Endothelial cell of umbilical vein (primary cell): ENCODE measurements at regions of chr21 and their contacts with region 1.

Region 1: GRCh38 chr21:42145569-42146272 is 73.2 kb upstream of the ABCG1 start:
- DNase-seq: peak; percentile 42
- H3K4me3 ChIP-seq: no peak overlapping the region
- H3K27ac ChIP-seq: no peak overlapping the region
- H3K4me1 ChIP-seq: no peaks in the 10 kb centered on the region
- H3K27me3 ChIP-seq: peaks cover 0 to 2% of the 10 kb centered on the region in 2 experiments
- CTCF ChIP-seq: peak; percentile 83 to 92
- POLR2A ChIP-seq: no peak

Region 2: DNA sequence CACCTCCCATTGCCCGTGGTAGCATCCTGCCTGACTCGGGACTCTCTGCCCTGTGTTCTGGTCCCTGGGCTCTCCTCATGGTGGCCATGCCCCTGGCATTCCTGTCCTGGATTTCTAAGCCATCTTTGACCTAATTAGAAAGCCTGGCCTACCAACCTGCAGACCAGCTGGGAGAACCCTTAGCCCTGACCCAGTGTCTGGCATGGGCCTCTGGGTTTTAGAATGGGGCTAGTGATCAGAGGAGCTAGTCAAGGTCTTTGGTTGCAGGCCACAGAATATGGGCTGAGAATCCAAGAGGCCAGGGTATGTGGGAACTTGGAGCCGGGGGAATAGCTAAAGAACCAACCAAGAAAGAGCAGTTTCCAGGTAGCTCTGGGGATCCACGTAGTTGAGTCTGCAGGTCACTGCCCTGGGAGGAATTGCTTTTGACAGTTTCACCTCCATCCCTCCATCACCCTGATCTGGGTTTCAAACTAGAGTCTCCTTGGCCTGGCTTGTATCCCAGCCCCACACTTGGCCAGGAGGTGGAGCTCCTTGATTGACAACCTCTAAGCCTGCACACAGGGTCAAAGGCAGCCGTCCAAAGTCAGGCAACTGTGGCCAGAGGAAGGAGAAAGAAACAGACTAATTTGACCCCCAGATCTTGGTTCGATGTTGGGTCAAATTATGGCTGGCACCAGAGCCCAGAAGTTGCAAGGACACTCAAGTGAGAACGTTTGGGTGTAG is 18.5 kb after region 1 on chr21:
- CTCF ChIA-PET with region 1: interaction called, 12 read pairs
- POLR2A ChIA-PET with region 1: no interaction called
- dilution Hi-C with region 1: no loop called
- intact Hi-C with region 1: no loop called
- DNase-seq: peak; percentile 53
- H3K4me3 ChIP-seq: no peak overlapping the region
- H3K27ac ChIP-seq: no peak overlapping the region
- H3K4me1 ChIP-seq: no peaks in the 10 kb centered on the region
- H3K27me3 ChIP-seq: no peaks in the 10 kb centered on the region
- CTCF ChIP-seq: peak; percentile 64 to 72
- POLR2A ChIP-seq: no peak

Region 3: GRCh38 chr21:42289926-42290325 is 144.2 kb after region 1 on chr21:
- CTCF ChIA-PET with region 1: interaction called, 10 read pairs
- POLR2A ChIA-PET with region 1: no interaction called
- dilution Hi-C with region 1: no loop called
- intact Hi-C with region 1: no loop called
- DNase-seq: no peak
- H3K4me3 ChIP-seq: no peak overlapping the region
- H3K27ac ChIP-seq: no peak overlapping the region
- H3K4me1 ChIP-seq: no peaks in the 10 kb centered on the region
- H3K27me3 ChIP-seq: no peaks in the 10 kb centered on the region
- CTCF ChIP-seq: no peak
- POLR2A ChIP-seq: no peak

Region 4: DNA sequence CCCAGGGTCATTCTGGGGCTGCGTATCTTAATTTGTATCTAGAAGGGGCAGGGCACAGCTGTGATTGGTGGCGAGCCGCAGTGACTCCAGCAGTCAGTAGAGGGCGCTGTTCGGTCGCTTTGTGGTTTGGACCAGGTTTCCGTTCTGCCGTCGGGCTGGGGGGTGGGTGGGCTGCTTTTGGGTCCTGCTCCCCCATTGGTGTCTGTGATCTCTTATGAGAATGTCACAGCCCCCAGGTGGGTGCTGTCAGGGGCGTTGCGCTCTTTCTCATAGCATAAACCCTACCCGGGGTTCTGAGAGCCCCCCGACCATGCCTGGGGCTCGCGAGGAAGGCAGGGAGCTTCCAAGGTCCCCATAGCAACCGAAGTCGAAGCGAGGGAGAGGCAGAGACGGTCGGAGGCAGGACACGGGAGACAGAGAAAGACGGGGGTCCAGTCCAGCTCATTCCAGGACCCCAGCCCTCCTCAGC is 164.1 kb after region 1 on chr21:
- CTCF ChIA-PET with region 1: interaction called, 14 read pairs
- POLR2A ChIA-PET with region 1: no interaction called
- dilution Hi-C with region 1: no loop called
- intact Hi-C with region 1: no loop called
- DNase-seq: peak; percentile 30
- H3K4me3 ChIP-seq: no peak overlapping the region
- H3K27ac ChIP-seq: no peak overlapping the region
- H3K4me1 ChIP-seq: no peaks in the 10 kb centered on the region
- H3K27me3 ChIP-seq: peaks cover 2 to 6% of the 10 kb centered on the region in 2 experiments
- CTCF ChIP-seq: peak; percentile 71 to 88
- POLR2A ChIP-seq: no peak

Region 5: GRCh38 chr21:42381334-42381984 is 235.7 kb after region 1 on chr21:
- CTCF ChIA-PET with region 1: interaction called, 51 read pairs
- POLR2A ChIA-PET with region 1: no interaction called
- dilution Hi-C with region 1: no loop called
- intact Hi-C with region 1: loop called (anchors 1 kb)
- DNase-seq: peak; percentile 31
- H3K4me3 ChIP-seq: no peak overlapping the region
- H3K27ac ChIP-seq: no peak overlapping the region
- H3K4me1 ChIP-seq: no peaks in the 10 kb centered on the region
- H3K27me3 ChIP-seq: no peaks in the 10 kb centered on the region
- CTCF ChIP-seq: peak; percentile 68 to 69
- POLR2A ChIP-seq: no peak